ENCODE measurements at regions of chr14 and their contacts with region 1.

Region 1: GRCh38 chr14:105398044-105398725 is at the start of gene TEX22:
- DNase-seq: peak; percentile 92 to 96 (median 95)
- ATAC-seq: peak; percentile 74 to 94 (median 90)
- H3K4me3 ChIP-seq: peak within 1 kb of the TSS; percentile 74 to 99 (median 85)
- H3K27ac ChIP-seq: peak within 1 kb of the TSS; percentile 74 to 97 (median 91)
- H3K4me1 ChIP-seq: peaks cover 0 to 42% (median 23%) of the 10 kb centered on the region in 12 donors
- H3K27me3 ChIP-seq: no peaks in the 10 kb centered on the region
- CTCF ChIP-seq: peak in 10 of 12 donors; percentile 7 to 53 (median 42)
- POLR2A ChIP-seq: peak in 1 of 2 donors; percentile 78
- total RNA-seq, gene TEX22: 0.14 to 1.8 (median 0.82) TPM in 7 of 9 donors, not detected in the others

Region 2: DNA sequence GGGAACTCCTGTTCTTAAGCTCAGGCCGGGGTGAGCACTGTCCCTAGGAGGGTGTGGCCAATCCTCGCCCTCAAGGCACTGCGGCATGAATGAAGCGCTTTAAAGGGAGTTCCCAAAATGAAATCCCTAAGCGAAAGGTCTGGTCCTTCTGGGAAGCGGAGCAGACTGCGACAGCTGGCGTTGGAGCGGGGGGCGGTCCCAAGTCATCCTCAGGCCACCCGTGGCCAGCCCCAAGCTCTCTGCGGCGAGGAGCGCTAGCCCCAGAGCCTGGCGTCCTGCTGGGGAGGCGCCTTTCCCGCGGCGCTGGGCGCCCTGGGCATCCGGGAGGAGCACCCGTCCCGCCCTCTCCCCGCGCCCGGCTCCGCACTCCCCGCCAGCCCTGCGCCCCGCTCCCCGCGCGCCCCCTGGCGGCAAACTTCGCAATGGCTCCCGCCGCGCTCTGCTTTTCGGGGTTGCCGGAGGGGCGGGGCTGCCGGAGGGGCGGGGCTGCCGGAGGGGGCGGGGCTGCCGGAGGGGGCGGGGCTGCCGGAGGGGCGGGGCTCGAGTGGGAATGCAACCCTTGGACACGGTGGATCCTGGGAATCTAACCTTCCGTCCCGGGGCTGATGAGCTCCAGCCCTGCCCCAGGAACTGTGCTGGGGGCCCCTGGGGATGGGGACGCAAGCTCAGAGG is 571.9 kb before region 1 on chr14:
- intact Hi-C with region 1: no loop called
- DNase-seq: peak; percentile 91 to 96 (median 91)
- ATAC-seq: peak; percentile 59 to 94 (median 88)
- H3K4me3 ChIP-seq: peak overlapping the region; percentile 39 to 76 (median 68)
- H3K27ac ChIP-seq: peak overlapping the region in 8 of 12 donors; percentile 20 to 70 (median 46)
- H3K4me1 ChIP-seq: peaks cover 0 to 22% (median 18%) of the 10 kb centered on the region in 12 donors
- H3K27me3 ChIP-seq: peaks cover 0 to 17% (median 0%) of the 10 kb centered on the region in 9 donors
- CTCF ChIP-seq: peak; percentile 68 to 96 (median 84)
- POLR2A ChIP-seq: no peak

Region 3: GRCh38 chr14:105414456-105415371 is 16.5 kb after region 1 on chr14:
- intact Hi-C with region 1: loop called in 1 of 10 experiments (anchors 2 kb)
- DNase-seq: peak; percentile 83 to 92 (median 84)
- ATAC-seq: peak; percentile 49 to 87 (median 80)
- H3K4me3 ChIP-seq: peak overlapping the region; percentile 5 to 69 (median 58)
- H3K27ac ChIP-seq: peak overlapping the region in 11 of 12 donors; percentile 66 to 87 (median 80)
- H3K4me1 ChIP-seq: peaks cover 0 to 43% (median 24%) of the 10 kb centered on the region in 12 donors
- H3K27me3 ChIP-seq: peaks cover 0 to 29% (median 0%) of the 10 kb centered on the region in 9 donors
- CTCF ChIP-seq: peak; percentile 47 to 91 (median 78)
- POLR2A ChIP-seq: peak in 1 of 2 donors; percentile 41

Region 4: DNA sequence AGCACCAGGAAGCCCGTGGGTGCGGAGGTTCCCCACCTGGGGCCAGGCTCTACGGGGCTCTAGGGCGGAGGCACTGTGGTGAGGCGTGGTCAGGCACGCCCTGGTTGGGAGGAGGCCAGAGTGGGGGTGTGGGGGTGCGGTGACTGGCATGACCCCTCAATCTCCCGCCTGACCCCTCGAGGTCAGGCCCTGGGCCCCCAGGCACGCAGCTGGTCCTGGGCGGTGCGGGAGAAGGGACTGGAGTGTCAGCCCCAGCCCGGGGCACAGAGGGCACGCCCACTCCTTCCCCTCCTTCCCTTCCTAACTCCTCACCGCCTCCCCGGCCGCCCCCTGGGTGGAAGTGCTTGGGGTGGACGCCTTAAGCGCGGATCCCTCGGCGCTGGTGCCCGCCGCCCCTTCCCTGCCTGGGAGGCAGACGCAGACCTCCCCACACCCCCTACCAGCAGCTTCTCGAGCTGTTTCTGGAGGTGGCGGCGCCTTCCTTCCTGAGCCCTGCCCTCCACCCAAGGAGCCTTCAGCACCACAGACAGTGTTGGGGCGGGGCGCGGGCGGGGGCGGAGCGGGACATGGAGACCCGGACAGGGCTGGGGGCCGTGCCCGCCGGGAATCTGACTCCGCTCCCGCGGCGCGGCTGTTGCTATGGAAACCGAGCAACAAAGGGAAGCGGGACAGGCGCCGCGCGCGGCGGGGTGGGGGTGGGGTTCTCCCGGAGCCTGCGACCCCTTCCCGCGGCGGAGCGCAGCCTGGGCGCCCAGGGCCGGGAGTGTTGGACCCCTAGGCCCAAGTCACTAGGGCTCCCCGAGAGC is 75.7 kb after region 1 on chr14:
- intact Hi-C with region 1: loop called in 1 of 10 experiments (anchors 5 kb)
- DNase-seq: peak; percentile 97 to 99 (median 98)
- ATAC-seq: peak; percentile 19 to 53 (median 50)
- H3K4me3 ChIP-seq: peak overlapping the region; percentile 43 to 100 (median 71)
- H3K27ac ChIP-seq: peak overlapping the region; percentile 87 to 100 (median 97)
- H3K4me1 ChIP-seq: peaks cover 0 to 80% (median 60%) of the 10 kb centered on the region in 12 donors
- H3K27me3 ChIP-seq: peaks cover 0 to 26% (median 0%) of the 10 kb centered on the region in 9 donors
- CTCF ChIP-seq: no peak
- POLR2A ChIP-seq: peak in 1 of 2 donors; percentile 39

Region 5: GRCh38 chr14:105602799-105603793 is 204.9 kb after region 1 on chr14:
- intact Hi-C with region 1: no loop called
- DNase-seq: peak in 2 of 5 donors; percentile 20 to 52
- ATAC-seq: no peak
- H3K4me3 ChIP-seq: no peak overlapping the region
- H3K27ac ChIP-seq: no peak overlapping the region
- H3K4me1 ChIP-seq: no peaks in the 10 kb centered on the region
- H3K27me3 ChIP-seq: peaks cover 0 to 14% (median 0%) of the 10 kb centered on the region in 9 donors
- CTCF ChIP-seq: no peak
- POLR2A ChIP-seq: no peak

Region 6: DNA sequence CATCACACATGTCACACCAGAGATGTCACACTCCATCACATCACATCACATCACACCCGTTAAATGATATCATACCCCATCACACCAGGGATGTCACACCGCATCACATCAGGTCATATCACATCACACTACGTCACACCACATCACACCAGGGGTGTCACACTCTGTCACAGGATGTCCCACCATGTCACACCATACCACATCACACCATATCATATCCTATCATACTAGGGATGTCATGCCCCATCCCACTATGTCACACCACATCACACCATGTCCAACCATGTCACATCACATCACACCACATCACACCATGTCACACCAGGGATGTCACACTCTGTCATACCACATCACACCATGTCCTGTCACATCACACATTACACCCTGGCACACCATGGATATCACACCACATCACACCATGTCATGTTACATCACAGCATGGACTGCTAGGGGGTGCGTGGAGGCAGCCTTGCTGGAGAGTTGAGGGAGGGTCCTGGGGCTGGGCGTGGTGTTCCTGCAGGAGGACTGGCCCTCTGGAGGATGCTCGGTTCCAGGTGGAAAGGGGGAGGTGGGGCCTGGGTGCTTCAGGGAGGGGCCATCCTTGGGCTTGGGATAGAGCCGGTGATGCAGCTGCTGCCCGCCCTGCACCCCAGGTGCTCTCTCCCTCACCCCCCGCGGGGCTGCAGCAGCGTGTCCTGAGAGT is 262.8 kb after region 1 on chr14:
- intact Hi-C with region 1: no loop called
- DNase-seq: no peak
- ATAC-seq: peak in 1 of 4 donors; percentile 18
- H3K4me3 ChIP-seq: no peak overlapping the region
- H3K27ac ChIP-seq: no peak overlapping the region
- H3K4me1 ChIP-seq: peaks cover 0 to 6% (median 0%) of the 10 kb centered on the region in 12 donors
- H3K27me3 ChIP-seq: no peaks in the 10 kb centered on the region
- CTCF ChIP-seq: no peak
- POLR2A ChIP-seq: no peak

Region 7: DNA sequence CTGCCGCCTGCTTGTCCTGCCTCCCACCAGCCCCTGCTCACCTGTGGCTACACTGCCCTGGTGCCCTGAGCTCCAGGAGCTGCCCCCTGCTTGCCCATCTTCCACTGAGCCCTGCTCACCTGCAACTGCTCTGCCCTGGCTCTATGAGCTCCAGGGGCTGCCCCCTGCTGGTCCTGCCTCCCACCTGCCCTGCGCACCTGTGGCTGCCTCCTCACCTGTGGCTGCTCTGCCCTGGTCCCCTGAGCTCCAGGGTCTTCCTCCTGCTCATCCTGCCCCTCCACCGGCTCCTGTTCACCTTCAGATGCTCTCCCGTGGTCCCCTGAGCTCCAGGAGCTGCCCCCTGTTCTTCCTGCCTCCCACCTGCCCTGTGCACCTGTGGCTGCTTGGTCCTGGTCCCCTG is 375.8 kb after region 1 on chr14:
- intact Hi-C with region 1: no loop called
- DNase-seq: no peak
- ATAC-seq: no peak
- H3K4me3 ChIP-seq: no peak overlapping the region
- H3K27ac ChIP-seq: no peak overlapping the region
- H3K4me1 ChIP-seq: no peaks in the 10 kb centered on the region
- H3K27me3 ChIP-seq: no peaks in the 10 kb centered on the region
- CTCF ChIP-seq: no peak
- POLR2A ChIP-seq: no peak